ENCODE measurements at regions of chr6 and their contacts with region 1.

Region 1: GRCh38 chr6:97053643-97054411 is 129.3 kb downstream of the KLHL32 start:
- DNase-seq: no peak
- H3K4me3 ChIP-seq: no peak overlapping the region
- H3K27ac ChIP-seq: no peak overlapping the region
- H3K4me1 ChIP-seq: no peaks in the 10 kb centered on the region
- H3K27me3 ChIP-seq: peaks cover 2% of the 10 kb centered on the region
- CTCF ChIP-seq: peak in 1 of 3 donors; percentile 18
- EP300 ChIP-seq: no peak
- POLR2A ChIP-seq: no peak

Region 2: DNA sequence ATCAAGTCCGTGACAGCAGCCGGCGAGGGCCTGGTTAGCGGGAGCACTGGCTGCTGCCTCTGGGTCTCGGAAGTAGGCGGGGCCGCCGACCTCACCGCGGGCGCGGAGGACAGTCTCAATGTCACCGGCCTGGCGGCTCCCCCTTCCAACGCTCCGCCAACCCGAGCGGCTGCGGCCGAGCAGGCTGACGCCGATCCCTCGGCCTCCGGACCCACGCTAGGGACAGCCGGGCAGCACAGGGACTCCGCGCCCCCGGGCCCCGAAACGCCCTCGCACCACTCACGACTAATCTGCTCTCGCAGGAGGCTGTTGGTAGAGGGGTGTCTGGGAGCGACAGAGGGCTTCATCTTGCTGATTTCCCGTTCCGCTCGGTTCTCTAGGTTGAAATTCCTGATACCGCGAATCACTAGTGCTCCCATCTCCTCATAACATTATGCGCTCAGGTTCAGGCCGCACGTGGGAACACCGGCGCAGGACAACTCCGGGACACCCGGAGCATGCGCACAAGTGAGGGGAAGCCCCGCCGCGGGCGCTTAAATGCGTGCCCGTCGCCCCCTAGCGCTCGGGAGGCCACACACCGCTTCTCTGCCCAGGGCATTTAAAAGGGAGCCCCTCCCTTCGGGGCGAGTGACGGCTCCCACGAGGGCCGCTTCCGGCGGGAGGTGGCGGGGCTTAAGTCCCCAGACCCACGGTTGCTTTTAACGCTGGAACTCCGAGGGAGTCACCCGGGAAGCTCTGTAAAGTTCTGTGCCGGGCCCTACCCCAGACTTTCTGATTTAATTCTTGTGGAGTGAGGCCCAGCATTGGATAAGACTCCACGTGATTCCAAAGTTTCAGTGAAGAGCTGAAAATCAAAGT is 156.2 kb before region 1 on chr6 and contains the start of gene NDUFAF4:
- intact Hi-C with region 1: loop called in 3 of 4 experiments (anchors 5 to 10 kb)
- DNase-seq: peak; percentile 96 to 98 (median 97)
- H3K4me3 ChIP-seq: peak within 1 kb of the TSS; percentile 69
- H3K27ac ChIP-seq: peak within 1 kb of the TSS; percentile 76 to 81
- H3K4me1 ChIP-seq: peaks cover 6% of the 10 kb centered on the region
- H3K27me3 ChIP-seq: no peaks in the 10 kb centered on the region
- CTCF ChIP-seq: peak; percentile 92 to 95 (median 93)
- EP300 ChIP-seq: no peak
- POLR2A ChIP-seq: peak; percentile 58
- total RNA-seq, gene NDUFAF4: 10.3 to 35.5 (median 18.2) TPM

Region 3: DNA sequence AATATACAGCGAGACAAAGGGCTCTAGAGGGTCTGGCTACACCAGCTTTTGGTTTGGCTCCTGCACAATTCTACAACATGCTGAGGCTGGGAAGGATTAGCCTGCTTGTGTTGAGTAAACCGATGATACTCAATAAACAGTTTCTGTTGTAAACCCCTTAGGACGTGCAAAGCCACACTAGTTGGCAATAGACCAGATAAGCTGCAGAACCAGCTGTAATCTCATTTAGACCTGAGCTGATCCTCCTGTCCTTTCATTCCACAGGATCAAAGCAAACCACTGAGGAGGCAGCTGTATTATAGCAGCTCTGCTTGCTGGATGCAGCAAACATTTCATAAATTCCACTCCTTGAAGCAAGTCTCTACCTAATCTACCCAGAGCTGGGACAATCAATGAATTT is 149.5 kb after region 1 on chr6:
- intact Hi-C with region 1: no loop called
- DNase-seq: no peak
- H3K4me3 ChIP-seq: no peak overlapping the region
- H3K27ac ChIP-seq: no peak overlapping the region
- H3K4me1 ChIP-seq: no peaks in the 10 kb centered on the region
- H3K27me3 ChIP-seq: no peaks in the 10 kb centered on the region
- CTCF ChIP-seq: no peak
- EP300 ChIP-seq: no peak
- POLR2A ChIP-seq: no peak

Measured in ovary (tissue), 10 donors.